ENCODE measurements at regions of chr4 and their contacts with region 1.

Region 1: DNA sequence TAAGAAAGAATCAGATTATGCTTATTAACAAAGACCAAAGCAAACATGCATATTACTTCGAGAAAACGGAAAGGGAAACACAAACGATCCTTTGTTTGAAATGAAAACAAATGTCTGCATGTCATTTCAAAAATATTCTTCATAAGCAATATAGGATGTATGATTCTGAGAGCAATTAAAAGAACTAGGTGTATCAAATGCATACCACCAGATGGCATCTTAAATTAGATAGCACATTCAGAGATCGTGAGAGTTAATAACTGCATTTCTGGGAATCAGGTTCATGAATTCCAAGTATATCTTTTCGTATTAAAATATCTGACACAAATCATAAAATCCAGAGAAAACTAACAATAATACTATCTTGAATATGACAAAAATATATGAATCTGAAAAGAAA is 159.5 kb downstream of the PPP3CA start:
- DNase-seq: peak in 1 of 2 experiments; percentile 20
- ATAC-seq: no peak
- H3K4me3 ChIP-seq: no peak overlapping the region
- H3K27ac ChIP-seq: peak overlapping the region; percentile 6 to 37; a peak in 3 of 6 replicates
- H3K4me1 ChIP-seq: peaks cover 91% of the 10 kb centered on the region
- CTCF ChIP-seq: peak; percentile 45
- EP300 ChIP-seq: no peak
- POLR2A ChIP-seq: no peak
- RAD21 ChIP-seq: peak; percentile 44 to 54

Region 2: DNA sequence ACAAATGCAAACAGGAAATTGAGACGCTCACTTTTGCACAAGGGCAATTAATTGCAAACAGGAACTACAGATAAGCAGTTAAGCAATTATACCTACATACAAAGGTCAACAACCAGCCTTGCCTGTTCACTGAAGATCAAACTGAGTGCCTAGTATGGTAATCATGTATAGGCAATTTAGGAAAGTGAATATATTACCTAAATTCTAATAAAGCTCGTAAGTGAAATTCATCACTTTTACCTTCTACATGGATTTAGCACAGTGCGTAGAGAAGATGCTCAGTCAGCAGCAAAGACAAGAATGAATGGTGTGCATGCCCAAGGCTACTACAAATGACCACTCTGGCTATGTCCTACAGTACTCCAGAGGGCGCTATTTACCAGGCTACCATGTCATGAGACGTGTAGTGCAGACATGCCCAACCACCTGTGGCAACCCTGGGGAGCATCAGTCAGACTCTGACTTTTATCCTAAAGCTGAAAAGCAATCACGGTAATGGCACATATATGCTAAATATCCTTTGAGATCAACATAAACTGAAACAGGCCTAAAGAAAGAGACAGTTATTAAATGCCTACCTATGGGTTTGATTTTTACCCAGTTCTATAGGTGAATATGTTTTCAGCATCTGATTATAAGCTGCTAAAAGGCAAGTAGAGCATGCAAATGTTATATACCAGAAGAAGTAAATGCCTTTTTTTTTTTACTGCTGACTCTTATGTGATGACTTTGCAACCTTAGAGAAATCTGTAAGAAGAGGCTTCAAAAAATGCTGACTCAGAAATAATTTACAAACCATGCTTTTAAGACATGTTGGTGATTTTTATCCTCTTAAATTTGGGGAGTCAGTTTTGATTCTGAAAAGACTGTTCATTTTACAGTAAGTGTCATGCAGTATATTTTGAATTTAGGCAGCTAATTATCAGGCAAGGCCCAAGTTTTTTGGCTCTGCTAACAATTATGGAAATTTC is 18.5 kb before region 1 on chr4:
- CTCF ChIA-PET with region 1: interaction called, 13 read pairs
- POLR2A ChIA-PET with region 1: no interaction called
- DNase-seq: peak in 1 of 2 experiments; percentile 85
- ATAC-seq: peak; percentile 94
- H3K4me3 ChIP-seq: no peak overlapping the region
- H3K27ac ChIP-seq: peak overlapping the region in 1 of 2 experiments; percentile 32; a peak in 1 of 6 replicates
- H3K4me1 ChIP-seq: peaks cover 72% of the 10 kb centered on the region
- CTCF ChIP-seq: peak; percentile 62
- EP300 ChIP-seq: no peak
- POLR2A ChIP-seq: no peak
- RAD21 ChIP-seq: peak; percentile 82 to 90

Region 3: DNA sequence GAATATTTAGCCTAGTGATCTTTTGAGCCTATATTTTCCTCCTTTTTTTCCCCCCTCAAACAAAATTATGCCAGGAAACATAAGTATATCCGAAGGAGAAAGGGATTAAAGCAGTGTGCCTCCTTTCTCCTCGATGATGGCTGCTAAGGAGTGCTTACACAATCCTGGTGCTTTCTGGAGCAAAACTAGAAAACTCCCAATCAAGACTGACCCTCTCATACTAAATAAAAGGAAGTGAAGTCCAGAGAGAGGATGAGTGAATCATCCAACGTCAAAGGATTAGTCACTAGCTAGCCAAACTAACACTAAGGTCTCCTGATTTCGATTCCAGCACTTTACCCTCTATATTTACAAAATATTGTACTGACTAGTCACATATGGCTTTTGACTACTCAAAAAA is 12.7 kb after region 1 on chr4:
- CTCF ChIA-PET with region 1: no interaction called
- POLR2A ChIA-PET with region 1: no interaction called
- DNase-seq: peak; percentile 40 to 89
- ATAC-seq: peak; percentile 94 to 96
- H3K4me3 ChIP-seq: no peak overlapping the region
- H3K27ac ChIP-seq: peak overlapping the region; percentile 75 to 90
- H3K4me1 ChIP-seq: peaks cover 82% of the 10 kb centered on the region
- CTCF ChIP-seq: no peak
- EP300 ChIP-seq: no peak
- POLR2A ChIP-seq: no peak
- RAD21 ChIP-seq: no peak